ENCODE measurements at regions of chr1 and their contacts with region 1.

Region 1: GRCh38 chr1:100351095-100351891 is 1.0 kb upstream of the CDC14A start:
- DNase-seq: peak; percentile 93
- ATAC-seq: peak; percentile 79
- H3K4me3 ChIP-seq: peak overlapping the region; percentile 85 to 94 (median 89)
- H3K27ac ChIP-seq: peak overlapping the region; percentile 95
- H3K4me1 ChIP-seq: peaks cover 44% of the 10 kb centered on the region
- H3K27me3 ChIP-seq: no peaks in the 10 kb centered on the region; a peak in 1 of 5 replicates
- CTCF ChIP-seq: peak; percentile 68
- EP300 ChIP-seq: no peak
- POLR2A ChIP-seq: peak; percentile 58 to 87
- RAD21 ChIP-seq: no peak

Region 2: DNA sequence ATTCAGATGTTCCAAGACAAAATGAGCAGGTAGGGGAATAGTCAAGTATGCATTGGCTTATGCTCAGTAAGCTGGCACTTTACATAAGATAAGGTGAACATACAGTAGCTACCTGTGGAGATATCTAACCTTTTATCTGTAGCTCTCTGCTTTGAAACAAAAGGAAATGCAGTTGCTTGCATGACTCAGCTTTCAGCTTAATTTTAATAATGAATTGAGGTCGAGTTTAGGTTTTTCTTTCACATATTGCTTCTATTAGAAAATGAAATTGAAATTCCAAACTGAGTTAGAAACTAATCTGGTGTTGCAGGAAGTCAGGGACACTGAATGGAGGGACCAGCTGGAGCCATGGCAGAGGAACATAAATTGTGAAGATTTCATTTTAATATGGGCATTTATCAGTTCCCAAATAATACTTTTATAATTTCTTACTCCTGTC is 593.2 kb before region 1 on chr1:
- CTCF ChIA-PET with region 1: no interaction called
- POLR2A ChIA-PET with region 1: no interaction called
- in situ Hi-C with region 1: no loop called
- intact Hi-C with region 1: loop called (anchors 5 kb)
- DNase-seq: no peak
- ATAC-seq: no peak
- H3K4me3 ChIP-seq: peak overlapping the region in 1 of 3 experiments; percentile 17; a peak in 1 of 6 replicates
- H3K27ac ChIP-seq: peak overlapping the region; percentile 95
- H3K4me1 ChIP-seq: peaks cover 97% of the 10 kb centered on the region
- H3K27me3 ChIP-seq: no peaks in the 10 kb centered on the region
- CTCF ChIP-seq: no peak
- EP300 ChIP-seq: no peak
- POLR2A ChIP-seq: no peak
- RAD21 ChIP-seq: no peak

Region 3: DNA sequence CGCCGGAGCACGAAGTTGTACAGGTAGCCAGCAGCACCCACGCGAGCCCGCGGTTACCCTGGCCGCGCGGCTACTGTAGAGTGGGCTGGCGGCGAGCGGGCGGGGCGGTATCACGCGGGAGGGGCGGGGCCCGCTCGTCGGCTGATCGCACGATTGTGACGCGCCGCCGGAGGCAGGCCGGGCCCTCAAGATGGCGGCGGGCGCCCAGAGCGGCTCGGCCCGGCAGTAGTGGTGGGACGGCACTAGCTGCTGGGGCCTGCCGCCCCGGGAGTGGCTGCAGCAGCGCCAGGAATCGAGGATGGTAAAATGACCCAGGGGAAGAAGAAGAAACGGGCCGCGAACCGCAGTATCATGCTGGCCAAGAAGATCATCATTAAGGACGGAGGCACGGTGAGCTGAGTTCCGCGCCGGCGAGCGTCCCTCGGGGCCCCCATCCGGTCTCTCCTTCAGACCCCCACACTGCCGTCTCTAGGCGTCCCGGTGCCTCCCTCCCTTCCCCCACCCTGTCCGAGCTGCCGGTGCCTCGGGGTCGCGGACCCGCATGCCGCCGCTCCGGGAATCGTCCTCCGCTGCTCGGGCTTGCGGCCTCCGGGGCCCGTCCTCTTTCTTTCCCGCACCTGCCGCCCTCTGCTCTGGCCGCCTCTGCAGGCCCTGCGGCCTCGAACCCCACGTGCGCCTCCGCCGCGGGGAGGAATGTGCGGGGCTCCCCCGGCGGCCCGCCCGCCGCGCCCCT is 313.2 kb before region 1 on chr1:
- CTCF ChIA-PET with region 1: no interaction called
- POLR2A ChIA-PET with region 1: no interaction called
- in situ Hi-C with region 1: no loop called
- intact Hi-C with region 1: loop called (anchors 10 kb)
- DNase-seq: peak; percentile 57
- ATAC-seq: peak; percentile 93
- H3K4me3 ChIP-seq: peak overlapping the region; percentile 91 to 99 (median 97)
- H3K27ac ChIP-seq: peak overlapping the region; percentile 94
- H3K4me1 ChIP-seq: peaks cover 58% of the 10 kb centered on the region
- H3K27me3 ChIP-seq: no peaks in the 10 kb centered on the region; a peak in 1 of 5 replicates
- CTCF ChIP-seq: no peak
- EP300 ChIP-seq: peak in 1 of 2 experiments; percentile 6; a peak in 1 of 4 replicates
- POLR2A ChIP-seq: peak; percentile 94 to 97
- RAD21 ChIP-seq: 0 out of 2 replicates have a peak, but pooled peaks have one; percentile 13

Region 4: GRCh38 chr1:100249537-100250257 is 101.6 kb before region 1 on chr1 and contains the start of gene DBT:
- CTCF ChIA-PET with region 1: no interaction called
- POLR2A ChIA-PET with region 1: interaction called, 7 read pairs
- in situ Hi-C with region 1: no loop called
- intact Hi-C with region 1: loop called (anchors 5 kb)
- DNase-seq: peak; percentile 92
- ATAC-seq: peak; percentile 100
- H3K4me3 ChIP-seq: peak within 1 kb of the TSS; percentile 64 to 96 (median 71)
- H3K27ac ChIP-seq: peak within 1 kb of the TSS; percentile 81
- H3K4me1 ChIP-seq: peaks cover 37% of the 10 kb centered on the region
- H3K27me3 ChIP-seq: peaks cover 0 to 3% of the 10 kb centered on the region in 2 experiments; a peak in 1 of 5 replicates
- CTCF ChIP-seq: no peak
- EP300 ChIP-seq: no peak
- POLR2A ChIP-seq: peak; percentile 93 to 96
- RAD21 ChIP-seq: no peak
- total RNA-seq, gene DBT: 10.2 and 15.8 TPM in 2 replicates

Region 5: DNA sequence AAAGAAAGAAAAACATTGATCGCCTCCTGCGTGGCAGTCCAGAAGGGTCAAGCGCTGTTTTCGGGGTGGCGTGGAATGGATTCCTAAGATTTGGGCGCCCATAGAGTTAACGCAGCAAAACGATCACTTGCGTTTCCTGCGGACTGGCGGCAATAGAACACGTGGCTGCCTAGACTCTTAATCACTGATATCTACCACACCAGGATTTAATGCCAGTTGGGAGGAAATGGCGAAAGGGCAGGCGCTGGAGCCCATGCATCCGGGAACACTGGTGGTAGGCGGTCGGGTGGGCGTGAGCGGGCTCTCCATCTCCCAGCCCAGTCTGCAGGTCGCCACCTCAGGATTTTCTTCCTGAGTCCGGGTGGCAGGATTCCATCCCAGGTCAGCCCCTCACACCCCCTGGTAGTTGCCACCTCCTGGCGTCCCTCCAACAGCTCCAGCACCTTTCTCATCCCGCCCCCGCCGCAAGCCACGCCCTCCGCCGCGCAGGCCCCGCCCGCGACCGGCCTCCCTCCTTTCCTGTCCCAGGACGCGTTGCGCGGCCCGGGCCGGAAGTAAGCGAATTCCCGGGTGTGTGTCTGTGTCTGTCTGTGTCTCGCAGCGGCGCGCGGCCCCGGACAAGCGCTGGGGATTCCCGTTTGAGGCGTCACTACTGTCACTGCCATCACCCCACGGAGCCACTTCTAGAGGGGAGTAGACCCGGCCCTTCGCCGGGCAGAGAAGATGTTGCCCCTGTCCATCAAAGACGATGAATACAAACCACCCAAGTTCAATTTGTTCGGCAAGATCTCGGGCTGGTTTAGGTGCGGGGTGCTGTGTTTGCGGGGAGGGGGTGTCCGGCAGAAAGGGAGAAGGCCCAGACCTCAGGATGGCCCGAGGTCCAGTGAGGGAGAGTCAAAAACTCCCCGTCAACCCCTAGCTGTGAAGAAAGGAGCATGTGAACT is 544.5 kb after region 1 on chr1 and contains the start of gene SLC30A7:
- CTCF ChIA-PET with region 1: no interaction called
- POLR2A ChIA-PET with region 1: no interaction called
- in situ Hi-C with region 1: no loop called
- intact Hi-C with region 1: loop called (anchors 10 kb)
- DNase-seq: peak; percentile 84
- ATAC-seq: peak; percentile 92
- H3K4me3 ChIP-seq: peak within 1 kb of the TSS; percentile 81 to 97 (median 96)
- H3K27ac ChIP-seq: peak within 1 kb of the TSS; percentile 87
- H3K4me1 ChIP-seq: peaks cover 44% of the 10 kb centered on the region
- H3K27me3 ChIP-seq: no peaks in the 10 kb centered on the region; a peak in 1 of 5 replicates
- CTCF ChIP-seq: no peak
- EP300 ChIP-seq: peak; percentile 23 to 34; a peak in 1 of 4 replicates
- POLR2A ChIP-seq: peak in 1 of 2 experiments; percentile 76; a peak in 3 of 4 replicates
- RAD21 ChIP-seq: no peak
- total RNA-seq, gene SLC30A7: 27.4 and 40.8 TPM in 2 replicates